Testis (tissue), 5 donors: ENCODE measurements at regions of chr6 and their contacts with region 1.

Region 1: DNA sequence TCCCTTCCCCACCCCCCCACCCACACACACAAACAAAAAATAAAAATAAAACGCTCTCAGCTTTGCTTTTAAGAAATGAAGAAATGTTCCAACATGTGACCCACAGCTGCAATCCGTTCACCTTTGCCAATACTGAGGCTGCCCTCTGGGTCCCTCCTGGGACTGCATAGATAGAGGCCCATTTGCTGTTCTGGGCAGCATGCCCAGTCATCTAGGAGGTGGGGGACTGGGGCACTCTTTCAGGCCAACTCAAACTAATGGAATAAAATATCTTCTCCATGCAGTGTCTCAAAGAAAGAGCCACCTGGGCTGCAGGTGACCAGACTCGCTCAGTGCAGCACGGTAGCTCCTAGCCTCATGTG is 79.9 kb downstream of the SLC22A3 start:
- DNase-seq: peak; percentile 87
- H3K4me3 ChIP-seq: no peak overlapping the region
- H3K27ac ChIP-seq: peak overlapping the region in 1 of 2 donors; percentile 86
- H3K4me1 ChIP-seq: peaks cover 58% of the 10 kb centered on the region
- H3K27me3 ChIP-seq: no peaks in the 10 kb centered on the region
- CTCF ChIP-seq: no peak
- POLR2A ChIP-seq: no peak

Region 2: GRCh38 chr6:159979136-159979874 is 448.7 kb before region 1 on chr6:
- intact Hi-C with region 1: no loop called
- DNase-seq: peak; percentile 37
- H3K4me3 ChIP-seq: no peak overlapping the region
- H3K27ac ChIP-seq: peak overlapping the region in 1 of 2 donors; percentile 62
- H3K4me1 ChIP-seq: peaks cover 51% of the 10 kb centered on the region
- H3K27me3 ChIP-seq: no peaks in the 10 kb centered on the region
- CTCF ChIP-seq: no peak
- POLR2A ChIP-seq: no peak

Region 3: DNA sequence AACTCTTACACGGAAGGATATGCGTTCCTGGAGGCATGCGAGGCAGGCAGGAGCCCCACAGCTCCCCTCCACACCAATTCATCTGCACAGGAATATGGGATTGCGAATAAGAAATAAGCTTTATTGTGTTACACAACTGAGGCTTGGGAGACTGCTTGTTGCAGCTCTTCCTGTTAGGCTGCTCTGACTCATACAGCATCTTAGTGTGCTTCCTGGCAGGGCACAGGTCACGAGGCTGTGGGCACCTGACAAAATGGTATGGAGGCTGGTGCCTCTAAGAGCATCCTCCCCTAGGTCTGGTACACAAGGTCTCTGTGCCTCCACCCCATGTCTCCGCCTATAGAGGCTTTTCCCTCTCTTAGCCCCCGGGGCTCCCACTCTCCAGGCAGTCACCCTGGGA is 73.0 kb before region 1 on chr6:
- intact Hi-C with region 1: loop called (anchors 10 kb)
- DNase-seq: no peak
- H3K4me3 ChIP-seq: no peak overlapping the region
- H3K27ac ChIP-seq: no peak overlapping the region
- H3K4me1 ChIP-seq: peaks cover 20% of the 10 kb centered on the region
- H3K27me3 ChIP-seq: no peaks in the 10 kb centered on the region
- CTCF ChIP-seq: no peak
- POLR2A ChIP-seq: no peak

Region 4: GRCh38 chr6:160667639-160668481 is 239.8 kb after region 1 on chr6:
- intact Hi-C with region 1: no loop called
- DNase-seq: peak; percentile 54
- H3K4me3 ChIP-seq: no peak overlapping the region
- H3K27ac ChIP-seq: no peak overlapping the region
- H3K4me1 ChIP-seq: no peaks in the 10 kb centered on the region
- H3K27me3 ChIP-seq: no peaks in the 10 kb centered on the region
- CTCF ChIP-seq: peak in 2 of 3 experiments; percentile 38 to 40
- POLR2A ChIP-seq: no peak

Region 5: DNA sequence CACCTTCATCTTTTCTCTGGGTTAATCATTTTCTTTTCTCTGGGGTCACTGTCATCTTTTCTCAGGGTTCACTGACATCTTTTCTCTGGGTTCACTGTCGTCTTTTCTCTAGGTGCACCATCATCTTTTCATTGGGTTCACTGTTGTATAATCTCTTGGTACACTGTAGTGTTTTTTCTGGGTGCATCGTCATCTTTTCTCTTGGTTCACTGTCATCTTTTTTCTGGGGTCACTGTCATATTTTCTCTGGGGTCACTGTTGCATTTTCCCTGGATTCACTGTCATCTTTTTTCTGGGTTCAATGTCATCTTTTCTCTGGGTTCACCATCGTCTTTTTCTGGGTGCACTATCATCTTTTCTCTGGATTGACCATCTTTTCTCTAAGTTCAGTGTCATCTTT is 417.7 kb after region 1 on chr6:
- intact Hi-C with region 1: no loop called
- DNase-seq: no peak
- H3K4me3 ChIP-seq: no peak overlapping the region
- H3K27ac ChIP-seq: no peak overlapping the region
- H3K4me1 ChIP-seq: no peaks in the 10 kb centered on the region
- H3K27me3 ChIP-seq: no peaks in the 10 kb centered on the region
- CTCF ChIP-seq: no peak
- POLR2A ChIP-seq: no peak